B cell (primary cell): ENCODE measurements at regions of chr1 and their contacts with region 1.

Region 1: DNA sequence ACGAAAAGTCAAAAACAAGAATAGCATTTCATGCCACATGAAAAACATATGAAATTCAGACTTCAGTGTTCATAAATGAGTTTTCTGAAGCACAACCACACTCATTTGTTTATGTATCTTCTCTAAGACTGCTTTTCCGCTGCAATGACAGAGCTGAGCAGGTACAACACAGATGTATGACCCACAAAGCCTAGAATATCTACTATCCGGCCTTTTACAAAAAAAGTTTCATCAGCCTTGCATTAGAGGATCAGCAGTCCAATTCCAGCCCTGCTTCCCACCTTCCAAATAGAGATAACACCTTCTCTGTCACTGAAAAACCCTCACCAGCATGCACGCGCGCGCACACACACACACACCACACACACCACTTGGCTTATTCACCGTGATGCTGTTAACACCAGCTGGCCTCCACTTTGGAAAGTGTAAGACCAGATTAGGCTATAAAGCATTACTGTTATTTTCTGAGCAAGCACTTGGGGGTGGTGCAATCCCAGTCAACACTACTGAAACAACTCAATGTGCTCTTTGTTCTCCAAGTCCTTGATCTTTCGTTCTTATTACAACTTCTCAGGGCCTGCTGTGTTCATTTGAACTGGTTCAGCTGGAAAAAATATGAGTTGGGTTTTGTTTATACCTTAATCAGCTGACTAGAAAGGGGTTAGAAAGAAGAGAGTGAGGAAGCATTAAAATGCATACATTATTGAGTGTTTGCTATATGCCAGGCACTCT is 90.0 kb downstream of the GLUL start:
- DNase-seq: no peak
- ATAC-seq: no peak
- H3K4me3 ChIP-seq: no peak overlapping the region
- H3K4me3 Mint-ChIP-seq: no peak overlapping the region
- H3K27ac ChIP-seq: no peak overlapping the region
- H3K27ac Mint-ChIP-seq: no peak overlapping the region
- H3K4me1 ChIP-seq: no peaks in the 10 kb centered on the region
- H3K4me1 Mint-ChIP-seq: no peaks in the 10 kb centered on the region
- H3K27me3 ChIP-seq: no peaks in the 10 kb centered on the region
- H3K27me3 Mint-ChIP-seq: peaks cover 11% of the 10 kb centered on the region
- CTCF ChIP-seq: no peak

Region 2: DNA sequence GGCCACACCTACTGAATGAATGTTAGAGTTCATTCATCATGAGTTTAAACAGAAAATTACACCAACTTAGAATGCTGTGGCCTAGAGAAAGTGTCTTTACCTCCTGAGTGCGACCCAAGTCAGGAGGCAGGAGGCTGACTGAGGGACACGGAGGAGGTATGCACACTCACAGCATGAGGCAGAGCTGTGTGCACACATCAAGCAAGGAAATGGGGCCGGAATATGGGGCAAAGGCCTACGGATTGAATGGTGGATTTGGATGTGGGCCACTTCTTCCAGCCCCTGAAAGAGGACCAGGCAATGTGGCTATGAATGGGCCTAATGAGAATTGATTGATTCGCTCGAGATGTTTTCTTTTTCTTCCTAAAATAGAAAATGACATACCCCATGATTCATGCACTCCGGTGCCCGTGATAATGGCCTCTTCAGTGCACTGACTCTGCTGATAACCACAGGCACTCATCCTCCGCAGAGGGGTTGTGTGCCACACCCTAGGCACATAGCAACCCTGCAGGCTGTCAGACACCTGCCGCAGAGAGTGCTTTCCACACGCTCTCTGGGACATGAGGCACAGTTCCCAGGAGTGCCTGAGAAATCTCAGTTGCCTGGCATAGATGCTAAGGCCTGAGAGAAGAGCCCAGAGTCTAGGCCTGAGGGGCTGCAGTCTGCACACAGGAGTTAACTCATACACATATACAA is 65.5 kb before region 1 on chr1:
- CTCF ChIA-PET with region 1: no interaction called
- POLR2A ChIA-PET with region 1: no interaction called
- intact Hi-C with region 1: no loop called
- DNase-seq: no peak
- ATAC-seq: no peak
- H3K4me3 ChIP-seq: no peak overlapping the region
- H3K4me3 Mint-ChIP-seq: no peak overlapping the region
- H3K27ac ChIP-seq: no peak overlapping the region
- H3K27ac Mint-ChIP-seq: no peak overlapping the region
- H3K4me1 ChIP-seq: peaks cover 0 to 12% of the 10 kb centered on the region in 2 donors
- H3K4me1 Mint-ChIP-seq: peaks cover 6% of the 10 kb centered on the region
- H3K27me3 ChIP-seq: peaks cover 0 to 1% (median 0%) of the 10 kb centered on the region in 4 experiments
- H3K27me3 Mint-ChIP-seq: peaks cover 9% of the 10 kb centered on the region
- CTCF ChIP-seq: no peak

Region 3: GRCh38 chr1:182283746-182284544 is 17.7 kb before region 1 on chr1:
- CTCF ChIA-PET with region 1: no interaction called
- POLR2A ChIA-PET with region 1: interaction called, 14 read pairs
- intact Hi-C with region 1: no loop called
- DNase-seq: no peak
- ATAC-seq: no peak
- H3K4me3 ChIP-seq: no peak overlapping the region
- H3K4me3 Mint-ChIP-seq: no peak overlapping the region
- H3K27ac ChIP-seq: no peak overlapping the region
- H3K27ac Mint-ChIP-seq: no peak overlapping the region
- H3K4me1 ChIP-seq: no peaks in the 10 kb centered on the region
- H3K4me1 Mint-ChIP-seq: no peaks in the 10 kb centered on the region
- H3K27me3 ChIP-seq: no peaks in the 10 kb centered on the region
- H3K27me3 Mint-ChIP-seq: peaks cover 17% of the 10 kb centered on the region
- CTCF ChIP-seq: no peak